Activated B cell treated with CpG ODN at 0.5 μM for 24 hours (primary cell): ENCODE measurements at regions of chr21 and their contacts with region 1.

Region 1: GRCh38 chr21:25396135-25396711 is 211.1 kb downstream of the MRPL39 start:
- DNase-seq: peak; percentile 33
- ATAC-seq: peak; percentile 88
- H3K4me3 Mint-ChIP-seq: peak overlapping the region; percentile 81
- H3K27ac Mint-ChIP-seq: peak overlapping the region; percentile 84
- H3K4me1 Mint-ChIP-seq: peaks cover 31% of the 10 kb centered on the region
- H3K27me3 Mint-ChIP-seq: no peaks in the 10 kb centered on the region
- CTCF ChIP-seq: no peak

Region 2: GRCh38 chr21:25412100-25412499 is 15.9 kb after region 1 on chr21:
- CTCF ChIA-PET with region 1: no interaction called
- POLR2A ChIA-PET with region 1: no interaction called
- intact Hi-C with region 1: loop called (anchors 2 kb)
- DNase-seq: no peak
- ATAC-seq: no peak
- H3K4me3 Mint-ChIP-seq: no peak overlapping the region
- H3K27ac Mint-ChIP-seq: no peak overlapping the region
- H3K4me1 Mint-ChIP-seq: peaks cover 42% of the 10 kb centered on the region
- H3K27me3 Mint-ChIP-seq: no peaks in the 10 kb centered on the region
- CTCF ChIP-seq: no peak